ENCODE measurements at regions of chr7 and their contacts with region 1.

Region 1: DNA sequence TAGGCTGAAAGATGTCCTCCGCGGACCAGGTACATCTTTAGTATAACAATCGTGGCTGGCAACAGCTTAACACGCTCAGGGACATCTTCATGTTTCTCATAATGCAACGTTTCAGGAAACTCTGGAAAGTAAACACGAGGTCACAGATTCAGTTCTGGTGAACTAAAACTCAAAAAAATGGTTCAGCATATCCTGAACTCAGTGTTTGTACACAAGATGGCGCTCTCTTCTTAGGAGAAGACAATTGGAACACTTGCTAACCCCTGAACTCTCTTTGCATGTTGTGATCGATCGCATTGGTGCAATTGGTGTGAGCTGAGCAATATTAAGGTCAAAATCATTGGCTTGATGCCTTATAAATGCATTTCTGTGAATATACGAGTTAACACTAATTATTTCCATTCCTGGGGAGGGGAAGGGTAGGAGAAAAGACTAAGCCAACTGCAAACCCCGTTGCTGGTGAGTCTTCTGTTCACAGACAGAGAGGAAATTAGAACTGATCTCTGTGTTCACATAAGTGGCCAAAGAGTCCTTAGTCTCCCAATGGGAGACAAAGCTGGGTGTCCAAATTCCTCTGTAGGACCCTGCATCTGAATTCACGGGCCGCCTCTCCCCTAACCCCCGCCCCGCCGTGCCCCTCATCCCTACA is 52.6 kb upstream of the FAM180A start:
- DNase-seq: peak; percentile 44
- H3K4me3 ChIP-seq: no peak overlapping the region
- H3K27ac ChIP-seq: no peak overlapping the region
- H3K4me1 ChIP-seq: peaks cover 7% of the 10 kb centered on the region
- H3K27me3 ChIP-seq: no peaks in the 10 kb centered on the region
- CTCF ChIP-seq: peak; percentile 58 to 83 (median 74)
- POLR2A ChIP-seq: no peak

Region 2: GRCh38 chr7:135129580-135129979 is 671.6 kb before region 1 on chr7:
- intact Hi-C with region 1: no loop called
- DNase-seq: no peak
- H3K4me3 ChIP-seq: no peak overlapping the region
- H3K27ac ChIP-seq: no peak overlapping the region
- H3K4me1 ChIP-seq: no peaks in the 10 kb centered on the region
- H3K27me3 ChIP-seq: no peaks in the 10 kb centered on the region
- CTCF ChIP-seq: no peak
- POLR2A ChIP-seq: no peak

Region 3: DNA sequence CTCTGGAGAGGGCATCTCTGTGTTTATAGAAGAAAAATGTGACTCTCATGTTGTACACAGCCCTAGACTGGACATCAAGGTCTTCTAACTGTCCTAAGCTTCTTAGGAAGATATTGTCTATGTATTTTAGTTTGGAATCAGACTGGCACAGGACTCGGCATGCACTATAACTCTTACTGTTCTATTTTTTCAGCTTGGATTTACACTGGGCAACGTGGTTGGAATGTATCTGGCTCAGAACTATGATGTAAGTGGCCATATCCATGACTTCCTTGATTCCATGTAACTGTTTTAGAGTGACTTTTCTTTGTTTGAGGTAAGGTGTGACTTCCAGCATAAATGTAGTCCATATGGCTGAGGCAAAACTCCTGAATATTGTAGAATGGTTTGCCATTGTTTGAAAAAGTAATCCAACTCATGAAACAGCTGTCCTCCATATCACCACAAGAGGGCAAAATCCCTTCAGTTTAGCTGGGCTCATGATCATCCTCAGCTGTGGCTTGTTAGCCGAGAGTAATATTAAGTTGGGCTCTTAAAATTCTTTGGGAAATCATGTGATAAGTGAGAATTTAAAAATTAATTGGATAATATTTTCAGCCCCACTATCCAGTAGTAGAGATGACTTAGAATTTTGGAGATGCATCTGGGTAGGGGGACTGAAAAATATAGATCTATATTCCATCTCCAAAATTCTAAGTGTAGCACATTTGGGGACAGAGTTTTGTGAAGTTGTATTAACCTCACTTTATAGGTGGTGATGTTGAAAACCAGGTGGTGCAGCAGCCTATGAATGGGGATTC is 128.4 kb before region 1 on chr7:
- intact Hi-C with region 1: loop called (anchors 5 kb)
- DNase-seq: peak; percentile 34
- H3K4me3 ChIP-seq: no peak overlapping the region
- H3K27ac ChIP-seq: peak overlapping the region in 1 of 2 donors; percentile 44
- H3K4me1 ChIP-seq: peaks cover 2% of the 10 kb centered on the region
- H3K27me3 ChIP-seq: no peaks in the 10 kb centered on the region
- CTCF ChIP-seq: peak; percentile 51 to 86 (median 73)
- POLR2A ChIP-seq: no peak

Region 4: GRCh38 chr7:135714534-135715009 is 86.6 kb before region 1 on chr7:
- intact Hi-C with region 1: no loop called
- DNase-seq: no peak
- H3K4me3 ChIP-seq: no peak overlapping the region
- H3K27ac ChIP-seq: no peak overlapping the region
- H3K4me1 ChIP-seq: no peaks in the 10 kb centered on the region
- H3K27me3 ChIP-seq: no peaks in the 10 kb centered on the region
- CTCF ChIP-seq: no peak
- POLR2A ChIP-seq: no peak

Region 5: DNA sequence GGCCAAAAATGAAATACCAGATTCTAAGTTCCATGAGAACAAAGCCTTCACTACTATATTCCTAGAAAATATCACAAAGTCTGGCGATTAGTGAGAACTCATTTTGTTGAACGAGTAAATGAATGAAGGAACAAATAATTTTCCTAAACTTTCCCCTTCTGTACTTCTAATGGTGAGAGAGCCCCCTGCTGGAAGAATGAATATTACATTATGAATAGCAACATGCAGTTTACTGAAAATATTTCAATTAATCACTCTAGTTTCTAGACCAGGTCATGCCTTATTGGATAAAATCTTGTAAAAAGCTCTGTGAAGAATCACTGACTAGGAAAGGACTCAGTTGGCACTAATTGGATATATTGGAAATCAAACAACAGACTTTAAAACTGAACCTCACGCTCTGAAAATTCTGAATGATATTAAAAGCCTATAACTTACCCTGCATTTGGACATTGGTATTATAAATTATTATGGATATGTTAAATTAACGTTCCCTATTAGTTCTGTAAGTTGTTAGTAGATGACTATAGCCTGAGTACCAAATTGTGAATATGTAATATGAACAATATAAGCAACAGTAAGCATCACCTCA is 208.4 kb after region 1 on chr7:
- intact Hi-C with region 1: loop called (anchors 2 kb)
- DNase-seq: peak; percentile 9
- H3K4me3 ChIP-seq: no peak overlapping the region
- H3K27ac ChIP-seq: no peak overlapping the region
- H3K4me1 ChIP-seq: no peaks in the 10 kb centered on the region
- H3K27me3 ChIP-seq: no peaks in the 10 kb centered on the region
- CTCF ChIP-seq: peak in 3 of 4 experiments; percentile 81 to 85 (median 84)
- POLR2A ChIP-seq: no peak

Region 6: GRCh38 chr7:137454246-137454724 is 1653.1 kb after region 1 on chr7:
- intact Hi-C with region 1: loop called (anchors 10 kb)
- DNase-seq: no peak
- H3K4me3 ChIP-seq: no peak overlapping the region
- H3K27ac ChIP-seq: no peak overlapping the region
- H3K4me1 ChIP-seq: no peaks in the 10 kb centered on the region
- H3K27me3 ChIP-seq: no peaks in the 10 kb centered on the region
- CTCF ChIP-seq: peak; percentile 35 to 64 (median 50)
- POLR2A ChIP-seq: no peak

Measured in prostate gland (tissue), 2 donors.